Naive thymus-derived CD8-positive, alpha-beta T cell (primary cell): ENCODE measurements at regions of chr17 and their contacts with region 1.

Region 1: DNA sequence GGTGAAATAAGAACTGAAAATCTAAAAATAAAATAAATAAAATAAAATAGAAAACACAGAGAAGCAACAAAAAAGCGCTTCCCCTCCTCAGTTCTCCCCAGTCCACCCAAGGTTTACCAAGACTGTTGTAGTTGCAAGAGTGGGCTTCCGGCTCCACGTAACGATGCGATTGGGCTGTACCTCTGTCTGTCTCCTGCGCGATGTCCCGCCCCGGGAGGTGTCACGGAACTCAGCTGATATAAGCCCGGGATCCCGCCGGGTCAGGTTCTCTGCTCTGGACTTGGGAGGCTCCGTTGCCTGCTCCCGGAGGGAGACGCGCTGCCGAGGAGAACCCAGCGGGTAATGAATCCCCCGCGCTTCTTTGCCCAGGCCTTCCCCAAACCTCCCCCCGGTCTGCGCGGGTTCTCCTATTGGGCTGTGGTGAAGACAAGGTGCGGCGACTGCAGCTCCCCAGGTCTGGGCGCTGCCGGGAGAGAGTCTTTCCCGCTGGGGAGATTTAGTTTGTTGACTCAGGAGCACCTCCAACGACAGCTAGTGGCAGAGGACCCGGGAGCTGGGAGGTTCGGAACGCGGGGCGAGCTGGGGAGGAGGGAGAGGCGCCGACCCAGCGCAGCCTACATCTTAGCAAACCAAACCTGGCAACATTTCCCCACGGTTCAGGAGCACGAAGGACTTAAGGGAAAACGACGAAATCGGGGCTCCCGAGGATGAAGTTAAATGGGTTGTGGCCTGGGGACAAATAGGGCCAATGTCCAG is at the start of gene SLFN5:
- DNase-seq: peak; percentile 82 to 98 (median 94)
- ATAC-seq: peak; percentile 75 to 86
- H3K4me3 Mint-ChIP-seq: peak within 1 kb of the TSS; percentile 93 to 100 (median 99)
- H3K27ac Mint-ChIP-seq: peak within 1 kb of the TSS; percentile 97 to 100 (median 99)
- H3K4me1 Mint-ChIP-seq: peaks cover 36 to 75% (median 59%) of the 10 kb centered on the region in 4 donors
- H3K27me3 Mint-ChIP-seq: no peaks in the 10 kb centered on the region
- polyA plus RNA-seq, gene SLFN5: 73.8 to 161 (median 87.4) TPM

Region 2: DNA sequence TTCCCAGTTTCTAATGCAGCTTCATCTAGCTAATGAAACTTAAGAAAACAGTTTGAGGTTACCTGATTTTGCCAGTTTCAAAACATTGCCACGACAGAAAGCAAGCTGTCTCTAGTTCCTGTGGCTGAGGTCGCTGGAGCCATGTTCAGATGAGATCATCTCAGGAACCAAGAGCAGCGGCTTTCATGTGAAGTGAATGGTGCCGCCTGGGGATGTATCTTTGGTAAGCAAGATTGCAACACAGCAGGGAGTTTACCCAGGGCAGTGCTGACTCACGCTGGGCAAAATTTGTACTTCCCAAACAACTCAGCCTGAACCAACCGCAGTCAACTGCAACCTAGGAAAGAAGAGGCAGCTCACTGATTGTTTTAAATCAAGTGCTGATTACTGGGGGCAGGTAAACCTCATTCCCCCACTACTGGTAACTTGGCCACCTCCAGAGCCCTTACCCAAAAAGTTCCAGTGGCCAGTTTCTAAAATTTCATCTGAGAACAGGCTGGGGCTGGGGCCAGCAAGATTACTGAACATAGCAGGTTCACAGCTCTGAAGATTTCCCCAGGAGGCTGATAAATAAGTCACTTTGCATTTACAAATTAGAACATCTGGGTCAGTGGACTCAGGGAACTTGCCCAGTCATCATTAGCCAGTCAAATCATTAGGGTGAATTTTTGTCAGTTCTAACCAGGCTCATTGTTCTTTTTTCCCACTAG is 179.3 kb before region 1 on chr17 and contains the start of gene RFFL:
- POLR2A ChIA-PET with region 1: no interaction called
- DNase-seq: peak; percentile 54 to 91 (median 80)
- ATAC-seq: peak; percentile 98 to 99
- H3K4me3 Mint-ChIP-seq: peak within 1 kb of the TSS; percentile 59 to 86 (median 78)
- H3K27ac Mint-ChIP-seq: peak within 1 kb of the TSS; percentile 46 to 98 (median 94)
- H3K4me1 Mint-ChIP-seq: peaks cover 21 to 63% (median 56%) of the 10 kb centered on the region in 4 donors
- H3K27me3 Mint-ChIP-seq: no peaks in the 10 kb centered on the region
- polyA plus RNA-seq, gene RFFL: 30.8 to 39.7 (median 31.9) TPM

Region 3: GRCh38 chr17:35161281-35161761 is 81.7 kb before region 1 on chr17:
- POLR2A ChIA-PET with region 1: interaction called, 14 read pairs
- DNase-seq: peak in 4 of 10 donors; percentile 28 to 58 (median 43)
- ATAC-seq: peak; percentile 50 to 64
- H3K4me3 Mint-ChIP-seq: peak overlapping the region; percentile 63 to 83 (median 76)
- H3K27ac Mint-ChIP-seq: peak overlapping the region; percentile 85 to 98 (median 94)
- H3K4me1 Mint-ChIP-seq: peaks cover 35 to 65% (median 54%) of the 10 kb centered on the region in 4 donors
- H3K27me3 Mint-ChIP-seq: no peaks in the 10 kb centered on the region

Region 4: GRCh38 chr17:35189291-35189690 is 53.7 kb before region 1 on chr17:
- POLR2A ChIA-PET with region 1: interaction called, 122 read pairs
- DNase-seq: no peak
- ATAC-seq: no peak
- H3K4me3 Mint-ChIP-seq: peak overlapping the region; percentile 75 to 92 (median 84)
- H3K27ac Mint-ChIP-seq: peak overlapping the region; percentile 67 to 97 (median 94)
- H3K4me1 Mint-ChIP-seq: peaks cover 50 to 97% (median 78%) of the 10 kb centered on the region in 4 donors
- H3K27me3 Mint-ChIP-seq: no peaks in the 10 kb centered on the region

Region 5: DNA sequence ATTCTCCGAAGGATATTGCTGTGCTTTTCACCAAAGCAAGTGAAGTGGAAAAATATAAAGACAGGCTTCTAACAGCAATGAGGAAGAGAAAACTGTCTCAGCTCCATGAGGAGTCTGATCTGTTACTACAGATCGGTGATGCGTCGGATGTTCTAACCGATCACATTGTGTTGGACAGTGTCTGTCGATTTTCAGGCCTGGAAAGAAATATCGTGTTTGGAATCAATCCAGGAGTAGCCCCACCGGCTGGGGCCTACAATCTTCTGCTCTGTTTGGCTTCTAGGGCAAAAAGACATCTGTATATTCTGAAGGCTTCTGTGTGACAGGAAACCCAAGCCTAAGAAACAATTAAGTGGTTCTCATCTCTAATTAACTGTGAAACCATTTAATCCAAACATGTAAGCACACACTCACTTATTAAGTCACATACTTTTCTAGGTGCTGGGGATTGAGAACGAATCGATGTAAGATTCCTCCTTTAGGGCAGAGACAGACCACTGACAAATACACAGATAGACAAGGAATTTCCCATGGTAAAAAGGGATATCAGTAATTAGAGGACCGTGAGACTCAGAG is 22.7 kb after region 1 on chr17:
- POLR2A ChIA-PET with region 1: interaction called, 20 read pairs
- DNase-seq: no peak
- ATAC-seq: no peak
- H3K4me3 Mint-ChIP-seq: peak overlapping the region in 9 of 10 donors; percentile 25 to 74 (median 59)
- H3K27ac Mint-ChIP-seq: peak overlapping the region; percentile 74 to 89 (median 84)
- H3K4me1 Mint-ChIP-seq: peaks cover 28 to 76% (median 75%) of the 10 kb centered on the region in 4 donors
- H3K27me3 Mint-ChIP-seq: no peaks in the 10 kb centered on the region

Region 6: DNA sequence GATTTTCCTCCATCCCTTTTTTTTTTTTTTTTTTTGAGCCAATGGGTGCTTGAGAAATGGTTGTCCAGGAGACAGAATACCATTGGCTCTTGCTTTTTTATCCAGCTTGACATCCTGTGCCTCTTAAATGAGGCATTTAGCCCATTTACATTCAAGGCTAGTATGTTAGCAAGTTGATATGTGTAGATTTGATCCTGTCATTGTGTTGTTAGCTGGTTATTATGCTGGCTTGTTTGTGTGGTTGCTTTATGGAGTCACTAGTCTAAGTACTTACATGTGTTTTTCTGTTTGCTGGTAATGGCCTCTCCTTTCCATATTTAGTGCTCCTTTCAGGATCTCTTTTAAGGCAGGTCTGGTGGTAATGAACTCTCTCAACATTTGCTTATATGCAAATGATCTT is 144.5 kb after region 1 on chr17:
- POLR2A ChIA-PET with region 1: no interaction called
- DNase-seq: no peak
- ATAC-seq: no peak
- H3K4me3 Mint-ChIP-seq: no peak overlapping the region
- H3K27ac Mint-ChIP-seq: no peak overlapping the region
- H3K4me1 Mint-ChIP-seq: peaks cover 0 to 5% (median 3%) of the 10 kb centered on the region in 4 donors
- H3K27me3 Mint-ChIP-seq: peaks cover 0 to 3% (median 0%) of the 10 kb centered on the region in 5 donors

Region 7: GRCh38 chr17:35486920-35487732 is 244.1 kb after region 1 on chr17:
- POLR2A ChIA-PET with region 1: interaction called, 13 read pairs
- DNase-seq: peak; percentile 53 to 85 (median 70)
- ATAC-seq: peak; percentile 80 to 86
- H3K4me3 Mint-ChIP-seq: peak overlapping the region; percentile 86 to 98 (median 96)
- H3K27ac Mint-ChIP-seq: peak overlapping the region; percentile 96 to 99 (median 98)
- H3K4me1 Mint-ChIP-seq: peaks cover 21 to 64% (median 60%) of the 10 kb centered on the region in 4 donors
- H3K27me3 Mint-ChIP-seq: peaks cover 0 to 16% (median 0%) of the 10 kb centered on the region in 5 donors

Region 8: DNA sequence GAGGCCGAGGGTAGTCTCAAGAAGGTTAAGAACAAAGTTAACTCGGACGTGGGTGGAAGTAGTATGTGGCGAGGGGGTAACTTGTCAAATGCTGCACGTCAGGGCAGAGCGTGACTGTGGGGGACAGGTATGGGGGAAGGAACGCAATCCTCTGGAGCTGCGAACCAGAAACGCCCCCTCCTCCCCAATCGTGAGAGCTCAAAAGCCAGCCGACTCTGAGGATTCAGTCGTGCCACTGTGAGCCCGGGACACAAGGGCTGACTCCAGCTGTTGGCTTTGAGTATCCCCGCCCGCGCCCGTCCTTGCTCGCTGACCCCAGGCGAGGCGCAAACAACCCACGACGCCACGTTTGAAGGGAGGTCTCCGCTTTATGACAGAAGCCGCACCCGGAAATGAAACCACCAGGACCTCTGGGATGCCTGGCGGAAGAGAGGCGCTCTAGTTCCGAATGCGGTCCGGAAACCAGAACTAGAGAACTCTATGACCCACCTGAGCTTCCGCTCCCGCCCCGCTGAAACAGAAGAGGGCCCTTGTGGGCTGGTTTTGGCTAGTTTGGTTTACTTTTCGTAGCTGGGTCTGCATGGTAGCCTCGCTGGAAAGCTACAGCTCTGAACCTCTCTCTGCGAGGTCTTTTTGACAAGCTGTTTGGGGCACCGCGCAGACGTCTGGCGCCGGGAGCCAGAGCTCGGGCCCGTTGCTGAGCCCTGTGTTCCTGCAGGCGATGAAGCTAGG is 335.4 kb after region 1 on chr17 and contains the start of gene PEX12:
- POLR2A ChIA-PET with region 1: interaction called, 36 read pairs
- DNase-seq: peak; percentile 66 to 95 (median 88)
- ATAC-seq: peak; percentile 96 to 97
- H3K4me3 Mint-ChIP-seq: peak within 1 kb of the TSS; percentile 93 to 100 (median 98)
- H3K27ac Mint-ChIP-seq: peak within 1 kb of the TSS; percentile 98 to 100 (median 99)
- H3K4me1 Mint-ChIP-seq: peaks cover 10 to 30% (median 26%) of the 10 kb centered on the region in 4 donors
- H3K27me3 Mint-ChIP-seq: peaks cover 0 to under 1% (median 0%) of the 10 kb centered on the region in 5 donors
- polyA plus RNA-seq, gene PEX12: 1.7 to 2.5 (median 1.9) TPM